ENCODE measurements at regions of chr3 and their contacts with region 1.

Region 1: DNA sequence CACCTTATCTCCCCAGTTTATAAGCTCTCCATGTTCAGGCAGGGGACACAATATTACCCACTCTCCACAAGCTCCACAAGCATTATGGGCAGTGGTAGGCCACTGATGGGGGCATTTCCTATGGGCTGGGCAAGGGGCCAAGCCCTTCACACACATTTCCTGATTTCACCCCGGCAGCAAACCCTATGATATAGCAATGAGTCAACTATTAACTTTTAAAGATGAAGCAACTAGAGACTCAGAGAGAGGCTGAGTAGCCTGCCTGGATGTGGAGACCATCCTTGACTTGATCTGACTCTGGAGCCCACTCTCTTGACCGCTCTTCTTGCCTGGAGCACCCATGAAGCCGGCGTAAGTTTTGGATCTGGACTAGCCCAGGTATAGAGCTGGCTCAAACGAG is 27.4 kb downstream of the FOXL2NB start:
- DNase-seq: no peak
- H3K4me3 ChIP-seq: no peak overlapping the region
- H3K27ac ChIP-seq: no peak overlapping the region
- H3K4me1 ChIP-seq: no peaks in the 10 kb centered on the region
- H3K27me3 ChIP-seq: no peaks in the 10 kb centered on the region
- CTCF ChIP-seq: no peak
- EP300 ChIP-seq: no peak
- POLR2A ChIP-seq: no peak
- RAD21 ChIP-seq: no peak

Region 2: GRCh38 chr3:138935848-138936740 is 38.4 kb before region 1 on chr3:
- CTCF ChIA-PET with region 1: interaction called, 223 read pairs
- POLR2A ChIA-PET with region 1: no interaction called
- DNase-seq: peak in 1 of 2 experiments; percentile 99
- H3K4me3 ChIP-seq: peak overlapping the region; percentile 11 to 59 (median 39); a peak in 7 of 8 replicates
- H3K27ac ChIP-seq: no peak overlapping the region
- H3K4me1 ChIP-seq: peaks cover 9 to 28% (median 19%) of the 10 kb centered on the region in 4 experiments
- H3K27me3 ChIP-seq: peaks cover 46 to 69% (median 59%) of the 10 kb centered on the region in 4 experiments
- CTCF ChIP-seq: peak in 2 of 3 experiments; percentile 84 to 86; a peak in 3 of 4 replicates
- EP300 ChIP-seq: no peak
- POLR2A ChIP-seq: no peak; a peak in 1 of 3 replicates
- RAD21 ChIP-seq: peak; percentile 32 to 63; a peak in 3 of 4 replicates

Region 3: GRCh38 chr3:138946181-138947059 is 28.0 kb before region 1 on chr3:
- CTCF ChIA-PET with region 1: interaction called, 223 read pairs
- POLR2A ChIA-PET with region 1: interaction called, 4 read pairs
- DNase-seq: peak in 1 of 2 experiments; percentile 79
- H3K4me3 ChIP-seq: peak overlapping the region; percentile 37 to 67 (median 46)
- H3K27ac ChIP-seq: no peak overlapping the region
- H3K4me1 ChIP-seq: peaks cover 7 to 50% (median 21%) of the 10 kb centered on the region in 4 experiments
- H3K27me3 ChIP-seq: peaks cover 83 to 100% (median 96%) of the 10 kb centered on the region in 4 experiments
- CTCF ChIP-seq: peak in 2 of 3 experiments; percentile 41 to 48; a peak in 3 of 4 replicates
- EP300 ChIP-seq: no peak
- POLR2A ChIP-seq: peak in 1 of 2 experiments; percentile 14; a peak in 1 of 3 replicates
- RAD21 ChIP-seq: no peak

Region 4: DNA sequence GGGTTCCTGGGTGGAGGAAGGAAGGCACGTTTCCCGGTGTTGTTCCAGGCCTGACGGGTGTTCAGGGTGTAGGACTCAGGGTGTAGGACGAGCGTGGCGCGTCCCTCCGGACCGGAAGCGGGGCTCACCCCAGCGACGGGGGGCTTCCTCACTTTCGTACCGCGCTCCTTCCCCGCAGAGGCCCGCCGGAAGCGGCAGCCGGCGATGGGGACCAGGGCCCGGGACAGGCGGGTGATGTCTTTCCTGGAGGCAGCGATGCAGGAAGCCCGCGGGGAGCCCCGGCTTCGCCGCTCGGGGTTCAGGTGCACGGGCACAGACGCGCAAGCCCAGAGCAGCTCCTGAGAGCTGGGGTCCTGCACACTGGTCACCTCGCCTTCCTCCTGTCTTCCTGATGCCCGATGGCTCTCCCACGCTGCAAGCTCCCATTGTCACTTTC is 14.0 kb before region 1 on chr3:
- CTCF ChIA-PET with region 1: interaction called, 28 read pairs
- POLR2A ChIA-PET with region 1: interaction called, 6 read pairs
- DNase-seq: no peak
- H3K4me3 ChIP-seq: peak overlapping the region in 2 of 4 experiments; percentile 21 to 31; a peak in 3 of 8 replicates
- H3K27ac ChIP-seq: no peak overlapping the region
- H3K4me1 ChIP-seq: no peaks in the 10 kb centered on the region; a peak in 1 of 7 replicates
- H3K27me3 ChIP-seq: peaks cover 5 to 15% (median 10%) of the 10 kb centered on the region in 4 experiments
- CTCF ChIP-seq: no peak
- EP300 ChIP-seq: no peak
- POLR2A ChIP-seq: no peak
- RAD21 ChIP-seq: no peak

Region 5: GRCh38 chr3:138987181-138987580 is 12.7 kb after region 1 on chr3:
- CTCF ChIA-PET with region 1: interaction called, 18 read pairs
- POLR2A ChIA-PET with region 1: no interaction called
- DNase-seq: no peak
- H3K4me3 ChIP-seq: no peak overlapping the region
- H3K27ac ChIP-seq: no peak overlapping the region
- H3K4me1 ChIP-seq: no peaks in the 10 kb centered on the region
- H3K27me3 ChIP-seq: no peaks in the 10 kb centered on the region
- CTCF ChIP-seq: no peak
- EP300 ChIP-seq: no peak
- POLR2A ChIP-seq: no peak
- RAD21 ChIP-seq: no peak